ENCODE measurements at regions of chr20 and their contacts with region 1.

Region 1: GRCh38 chr20:20860078-20860806 is 147.8 kb upstream of the RALGAPA2 start:
- ATAC-seq: peak; percentile 82 to 94 (median 90)
- H3K4me3 ChIP-seq: no peak overlapping the region
- H3K27ac ChIP-seq: no peak overlapping the region
- H3K4me1 ChIP-seq: peaks cover 0 to 6% of the 10 kb centered on the region in 2 donors

Region 2: DNA sequence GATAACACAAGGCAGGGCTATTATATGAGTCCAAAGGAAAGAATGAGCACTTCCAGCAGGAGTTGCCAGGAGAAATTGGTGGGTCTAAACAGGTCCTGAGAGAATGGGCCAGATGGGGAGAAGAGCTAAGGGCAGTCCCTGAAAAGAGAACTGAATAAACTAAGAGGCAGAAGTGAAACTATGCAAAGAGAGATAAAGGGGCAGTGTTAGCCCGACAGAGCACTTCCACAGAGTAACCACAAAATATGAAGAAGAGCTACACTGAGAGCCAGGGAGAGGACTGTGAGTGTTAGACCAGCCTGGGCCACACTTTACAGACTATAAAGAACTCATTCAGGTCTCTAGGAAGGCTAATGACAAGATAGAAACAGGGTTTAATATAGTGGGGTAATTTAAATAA is 191.6 kb before region 1 on chr20:
- in situ Hi-C with region 1: no loop called
- ATAC-seq: peak in 3 of 8 experiments; percentile 22 to 55 (median 47)
- H3K4me3 ChIP-seq: no peak overlapping the region
- H3K27ac ChIP-seq: no peak overlapping the region
- H3K4me1 ChIP-seq: peaks cover 0 to 16% of the 10 kb centered on the region in 2 donors

Region 3: DNA sequence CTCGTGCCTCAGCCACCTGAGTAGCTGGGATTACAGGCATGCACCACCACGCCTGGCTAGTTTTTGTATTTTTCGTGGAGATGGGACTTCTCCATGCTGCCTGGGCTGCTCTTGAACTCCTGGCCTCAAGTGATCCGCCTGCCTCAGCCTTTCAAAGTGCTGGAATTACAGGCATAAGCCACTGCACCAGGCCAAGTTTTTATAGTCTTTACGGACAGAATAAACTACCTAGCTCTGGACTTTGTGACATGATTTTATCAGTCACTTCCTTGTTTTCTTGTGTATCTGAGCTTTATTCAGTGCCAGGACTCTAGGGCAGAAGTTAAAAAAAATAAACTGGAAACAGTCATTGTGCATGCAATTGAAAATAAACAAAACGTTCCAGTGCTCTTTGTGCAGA is 101.1 kb before region 1 on chr20:
- in situ Hi-C with region 1: no loop called
- ATAC-seq: peak in 1 of 8 experiments; percentile 25
- H3K4me3 ChIP-seq: no peak overlapping the region
- H3K27ac ChIP-seq: no peak overlapping the region
- H3K4me1 ChIP-seq: no peaks in the 10 kb centered on the region

Region 4: DNA sequence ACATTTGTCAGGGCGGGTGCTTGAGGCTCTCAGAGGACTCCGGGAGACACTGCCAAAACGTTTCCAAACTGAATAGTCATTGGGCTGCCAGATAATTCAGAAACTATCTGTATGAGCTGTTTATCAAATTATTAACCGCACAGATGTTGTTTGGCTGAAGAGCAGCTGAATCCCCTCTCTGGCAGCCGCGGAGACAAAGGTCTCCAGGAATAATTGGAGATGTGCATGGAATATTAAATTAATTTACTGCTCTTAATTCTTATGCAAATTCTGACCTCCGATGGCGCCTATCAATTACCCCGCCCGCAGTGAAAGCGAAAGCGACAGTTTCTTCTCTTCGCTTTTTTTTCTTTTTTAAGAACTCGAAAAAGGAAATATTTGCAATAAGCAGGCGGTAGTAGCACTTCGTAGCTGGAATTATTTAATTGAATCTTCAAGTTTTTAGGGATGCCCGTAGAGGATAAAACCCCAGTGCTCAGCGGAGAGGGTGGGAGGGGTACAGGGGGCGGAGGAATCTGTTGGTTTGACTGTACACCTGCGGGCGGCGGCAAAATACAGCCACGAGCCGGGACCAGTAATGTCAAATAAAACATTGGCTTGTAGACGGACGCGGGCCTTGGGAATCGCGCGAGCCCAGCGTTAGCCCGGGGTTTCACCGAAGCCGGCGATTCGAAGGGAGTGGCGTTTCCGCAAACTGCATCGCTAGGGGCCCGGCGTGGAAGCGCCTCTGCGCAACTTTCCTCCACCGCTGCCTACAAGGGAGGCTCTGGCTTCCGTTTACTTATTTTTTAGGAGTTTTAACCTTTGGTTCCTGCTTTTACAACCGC is 239.7 kb after region 1 on chr20:
- in situ Hi-C with region 1: loop called in 2 of 9 experiments (anchors 25 kb)
- ATAC-seq: peak in 7 of 8 experiments; percentile 8 to 41 (median 35)
- H3K4me3 ChIP-seq: peak overlapping the region; percentile 18 to 51 (median 25)
- H3K27ac ChIP-seq: peak overlapping the region; percentile 91 to 99
- H3K4me1 ChIP-seq: peaks cover 23 to 42% of the 10 kb centered on the region in 2 donors

Region 5: DNA sequence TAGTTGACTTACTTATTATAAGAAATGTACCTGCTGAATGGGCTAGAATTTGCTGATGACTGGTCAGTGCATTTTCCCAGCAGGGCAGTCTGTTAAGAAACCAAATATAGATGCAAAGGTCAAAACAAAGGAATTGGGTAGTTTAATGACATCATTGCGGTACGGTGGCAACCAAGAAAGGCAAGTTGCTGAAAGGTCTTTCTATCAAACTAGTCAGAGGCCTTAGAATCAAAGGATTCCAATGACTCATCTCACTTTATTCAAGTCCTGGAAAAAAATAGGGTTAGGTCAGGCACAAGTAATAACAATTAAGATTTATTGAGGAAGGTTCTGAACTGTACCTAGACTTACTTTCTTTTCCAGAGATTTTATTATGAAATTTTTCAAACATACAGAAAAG is 342.0 kb after region 1 on chr20:
- in situ Hi-C with region 1: loop called in 1 of 9 experiments (anchors 25 kb)
- ATAC-seq: peak in 3 of 8 experiments; percentile 41 to 58 (median 49)
- H3K4me3 ChIP-seq: no peak overlapping the region
- H3K27ac ChIP-seq: no peak overlapping the region
- H3K4me1 ChIP-seq: peaks cover 0 to 2% of the 10 kb centered on the region in 2 donors

Region 6: GRCh38 chr20:21235484-21236445 is 375.5 kb after region 1 on chr20:
- in situ Hi-C with region 1: loop called in 2 of 9 experiments (anchors 25 kb)
- ATAC-seq: peak; percentile 51 to 81 (median 78)
- H3K4me3 ChIP-seq: peak overlapping the region in 3 of 5 donors; percentile 3 to 15 (median 7)
- H3K27ac ChIP-seq: no peak overlapping the region
- H3K4me1 ChIP-seq: peaks cover 17 to 23% of the 10 kb centered on the region in 2 donors

Region 7: DNA sequence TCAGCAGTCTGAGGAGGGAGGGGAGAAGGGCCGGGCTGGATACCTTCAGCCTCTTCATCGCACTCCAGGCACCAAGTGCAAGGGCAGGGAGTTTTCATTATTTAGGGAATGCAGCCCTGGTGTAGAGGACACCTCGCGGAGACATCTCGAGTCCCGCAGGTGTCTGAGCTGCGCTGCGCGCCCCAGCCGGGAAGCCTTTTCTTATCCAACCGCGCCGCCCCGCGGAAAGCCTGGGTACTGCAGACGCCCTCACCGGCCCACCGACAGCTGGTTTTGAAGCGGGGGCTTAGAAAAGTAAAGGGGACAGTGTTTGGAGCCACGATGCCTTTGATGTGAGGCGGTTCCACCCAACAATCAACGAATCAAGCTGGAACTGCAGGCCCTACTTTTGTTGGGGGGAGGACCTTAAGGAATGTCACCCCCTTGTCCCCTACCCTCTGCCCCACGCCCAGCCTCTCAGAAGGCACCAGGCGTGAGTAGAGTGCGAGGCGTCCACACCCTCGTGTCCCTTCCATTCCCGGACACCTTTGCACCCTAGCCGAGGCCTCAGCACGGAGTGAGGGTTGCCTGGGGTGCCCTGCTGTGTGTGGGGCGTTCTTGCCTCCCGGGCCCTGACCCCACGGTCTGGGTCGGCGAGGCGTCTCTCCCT is 645.0 kb after region 1 on chr20:
- in situ Hi-C with region 1: loop called in 8 of 9 experiments (anchors 10 to 25 kb)
- ATAC-seq: peak; percentile 11 to 62 (median 48)
- H3K4me3 ChIP-seq: peak overlapping the region in 2 of 5 donors; percentile 31 to 34
- H3K27ac ChIP-seq: no peak overlapping the region
- H3K4me1 ChIP-seq: peaks cover 0 to 16% of the 10 kb centered on the region in 2 donors

Region 8: GRCh38 chr20:21583486-21584168 is 723.4 kb after region 1 on chr20:
- in situ Hi-C with region 1: loop called in 1 of 9 experiments (anchors 25 kb)
- ATAC-seq: no peak
- H3K4me3 ChIP-seq: no peak overlapping the region
- H3K27ac ChIP-seq: no peak overlapping the region
- H3K4me1 ChIP-seq: no peaks in the 10 kb centered on the region